Caco-2 (cell line): ENCODE measurements at regions of chr3 and their contacts with region 1.

Region 1: GRCh38 chr3:7144696-7145308 is 283.9 kb downstream of the GRM7 start:
- DNase-seq: peak; percentile 29 to 30
- H3K4me3 ChIP-seq: no peak overlapping the region
- H3K4me3 Mint-ChIP-seq: no peak overlapping the region
- H3K27ac Mint-ChIP-seq: no peak overlapping the region
- H3K4me1 ChIP-seq: no peaks in the 10 kb centered on the region
- H3K4me1 Mint-ChIP-seq: no peaks in the 10 kb centered on the region
- H3K27me3 ChIP-seq: no peaks in the 10 kb centered on the region
- H3K27me3 Mint-ChIP-seq: peaks cover 9% of the 10 kb centered on the region
- CTCF ChIP-seq: peak; percentile 40 to 43

Region 2: GRCh38 chr3:6994081-6994668 is 150.6 kb before region 1 on chr3:
- CTCF ChIA-PET with region 1: no interaction called
- POLR2A ChIA-PET with region 1: no interaction called
- intact Hi-C with region 1: loop called (anchors 10 kb)
- DNase-seq: peak in 1 of 2 experiments; percentile 2
- H3K4me3 ChIP-seq: no peak overlapping the region
- H3K4me3 Mint-ChIP-seq: no peak overlapping the region
- H3K27ac Mint-ChIP-seq: no peak overlapping the region
- H3K4me1 ChIP-seq: no peaks in the 10 kb centered on the region
- H3K4me1 Mint-ChIP-seq: no peaks in the 10 kb centered on the region
- H3K27me3 ChIP-seq: no peaks in the 10 kb centered on the region
- H3K27me3 Mint-ChIP-seq: no peaks in the 10 kb centered on the region
- CTCF ChIP-seq: peak in 1 of 2 experiments; percentile 12